Activated T-helper 2 cell treated with anti-CD3 and anti-CD28 coated beads, Interferon-gamma antibody, Interleukin-2, Interleukin-4, amounts not matched to agents 10 μg/mL and 5 μg/mL and 100 μg/mL, durations not matched to agents 14 hours and 24 hours and 36 hours (primary cell): ENCODE measurements at regions of chr9 and their contacts with region 1.

Region 1: DNA sequence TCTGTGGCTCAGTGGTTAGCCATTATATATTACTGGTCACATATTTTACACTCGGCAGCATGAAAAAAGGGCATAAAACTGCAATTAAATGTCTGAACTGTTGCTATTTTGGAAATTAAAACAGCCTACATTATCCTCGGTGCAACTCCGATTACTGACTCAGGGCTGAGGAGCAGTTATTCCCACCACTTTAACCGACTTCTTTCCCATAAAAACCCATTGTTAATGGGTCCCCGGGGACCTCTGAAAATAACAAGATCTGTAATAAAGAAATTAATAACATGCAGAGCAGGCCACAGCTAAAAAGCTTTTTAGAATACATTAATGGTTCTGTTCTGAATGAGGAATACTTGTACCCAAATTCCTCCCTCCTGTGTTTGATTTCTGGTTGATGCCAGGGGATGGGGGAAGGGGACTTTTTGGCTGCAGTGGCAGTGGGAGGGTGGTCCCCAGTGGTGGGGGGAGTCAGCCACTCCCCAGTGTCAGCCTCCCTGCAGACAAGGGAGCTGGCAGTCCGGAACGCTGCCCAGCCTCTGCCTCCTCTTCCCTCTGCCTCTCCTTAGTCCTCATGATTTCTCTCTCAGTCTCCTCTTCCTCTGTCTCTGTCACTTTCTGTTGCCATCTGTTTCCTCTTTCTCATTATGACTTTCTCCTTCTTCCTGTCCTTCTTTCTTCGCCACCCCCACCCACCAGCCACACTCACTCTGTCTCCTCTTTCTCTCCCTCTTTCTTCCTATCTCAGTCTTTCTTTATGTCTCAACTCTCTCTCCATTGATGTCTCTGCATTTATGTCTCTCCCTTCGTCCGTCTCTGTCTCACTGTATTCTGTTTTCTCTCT is 59.0 kb upstream of the ZBTB43 start:
- DNase-seq: peak; percentile 7
- H3K4me3 Mint-ChIP-seq: peak overlapping the region; percentile 6
- H3K27ac Mint-ChIP-seq: peak overlapping the region; percentile 24
- H3K4me1 Mint-ChIP-seq: peaks cover 33% of the 10 kb centered on the region
- H3K27me3 Mint-ChIP-seq: peaks cover 7% of the 10 kb centered on the region

Region 2: DNA sequence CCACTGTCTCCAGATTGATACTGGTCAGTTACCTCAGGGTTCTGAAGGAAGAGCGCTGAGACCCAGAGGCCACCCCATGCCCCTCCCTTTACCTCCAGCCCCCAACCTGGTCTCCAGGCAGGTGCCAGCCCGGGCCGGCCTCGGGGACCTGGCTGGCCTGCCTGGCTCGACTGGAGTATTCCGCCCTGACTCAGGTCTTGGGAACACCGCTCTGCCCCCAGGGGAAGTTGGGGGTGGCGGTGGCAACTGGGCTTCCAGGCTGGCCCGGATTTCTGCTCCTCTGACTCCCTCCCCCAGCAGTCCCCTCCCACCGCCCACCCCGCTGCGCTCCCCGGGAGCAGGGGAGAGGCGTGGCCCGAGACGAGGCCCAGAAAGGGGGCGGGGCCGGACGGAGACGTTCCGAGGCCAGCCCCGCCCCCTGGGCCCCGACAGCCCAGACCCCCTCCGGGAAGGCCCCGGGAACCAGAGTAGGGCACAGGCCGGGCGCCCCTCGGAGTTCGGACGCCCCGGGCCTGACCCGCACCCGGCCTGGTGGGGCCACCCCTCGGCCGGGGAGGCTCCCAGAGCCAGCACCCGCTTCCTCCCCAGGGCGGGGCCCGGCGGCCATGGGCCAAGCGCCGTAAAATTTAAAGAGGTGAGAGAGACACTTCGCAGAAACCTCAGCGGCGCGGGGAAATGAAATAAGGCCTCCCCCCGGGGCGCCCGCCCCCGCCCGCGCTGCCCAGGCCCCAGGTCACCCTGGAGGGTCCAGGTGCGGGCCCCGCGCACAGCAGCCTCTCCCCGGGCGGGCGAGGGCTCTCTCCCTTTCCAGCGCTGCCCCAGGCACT is 23.3 kb before region 1 on chr9:
- intact Hi-C with region 1: loop called (anchors 2 kb)
- DNase-seq: peak; percentile 80
- H3K4me3 Mint-ChIP-seq: peak overlapping the region; percentile 85
- H3K27ac Mint-ChIP-seq: peak overlapping the region; percentile 68
- H3K4me1 Mint-ChIP-seq: peaks cover 35% of the 10 kb centered on the region
- H3K27me3 Mint-ChIP-seq: peaks cover 16% of the 10 kb centered on the region

Region 3: DNA sequence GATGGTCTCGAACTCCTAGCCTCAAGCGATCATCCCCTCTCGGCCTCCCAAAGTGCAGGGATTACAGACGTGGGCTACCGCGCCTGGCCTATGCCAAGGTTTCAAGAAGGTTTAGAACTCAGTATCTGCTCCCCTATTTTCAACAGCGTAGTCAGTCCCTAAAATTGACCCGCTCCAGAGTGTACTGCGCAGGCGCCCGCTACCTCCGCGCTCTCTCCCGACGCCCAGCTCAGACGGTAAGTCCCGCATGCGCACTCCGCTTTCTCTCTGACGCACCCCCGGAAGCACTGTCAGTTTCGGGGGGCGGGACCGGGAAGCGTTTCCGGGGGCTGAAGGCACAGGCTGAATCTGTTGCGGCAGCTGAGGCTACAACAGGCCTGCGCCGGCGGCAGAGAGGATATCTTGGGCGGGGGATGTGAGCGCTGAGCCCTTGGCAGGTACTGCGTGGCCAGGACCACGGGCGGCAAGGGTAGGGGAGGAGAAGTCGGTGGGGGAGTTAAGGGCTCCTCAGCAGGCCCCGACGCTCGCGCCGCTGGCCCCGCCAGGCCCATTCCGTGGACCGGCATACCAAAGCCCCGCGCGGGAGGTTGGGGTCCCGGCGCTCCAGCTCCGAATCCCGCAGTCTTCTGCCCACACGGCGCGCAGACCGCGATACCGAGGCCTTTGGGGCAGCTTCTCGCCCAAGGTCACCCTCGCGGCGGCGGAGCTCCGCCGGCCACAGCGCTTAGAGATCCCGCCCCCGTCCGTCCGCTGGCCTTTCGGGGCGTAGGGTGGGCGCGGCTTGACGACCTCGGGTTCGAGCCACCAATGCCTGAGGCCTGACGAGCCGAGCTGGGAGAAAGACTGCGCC is 59.1 kb after region 1 on chr9 and contains the start of gene ZBTB43:
- intact Hi-C with region 1: no loop called
- DNase-seq: peak; percentile 98
- H3K4me3 Mint-ChIP-seq: peak within 1 kb of the TSS; percentile 90
- H3K27ac Mint-ChIP-seq: peak within 1 kb of the TSS; percentile 94
- H3K4me1 Mint-ChIP-seq: peaks cover 28% of the 10 kb centered on the region
- H3K27me3 Mint-ChIP-seq: no peaks in the 10 kb centered on the region
- total RNA-seq, gene ZBTB43: 16.4 and 22.3 TPM in 2 replicates